GM12878 (cell line): ENCODE measurements at regions of chr12 and their contacts with region 1.

Region 1: GRCh38 chr12:1117970-1118563 is 127.0 kb downstream of the ERC1 start:
- DNase-seq: no peak
- ATAC-seq: peak; percentile 73
- H3K4me3 ChIP-seq: no peak overlapping the region
- H3K27ac ChIP-seq: no peak overlapping the region
- H3K4me1 ChIP-seq: peaks cover 4% of the 10 kb centered on the region; the same call in 1 of the 2 replicates
- H3K27me3 ChIP-seq: no peaks in the 10 kb centered on the region
- CTCF ChIP-seq: peak; percentile 80 to 87 (median 83)
- EP300 ChIP-seq: no peak
- POLR2A ChIP-seq: no peak
- RAD21 ChIP-seq: peak; percentile 97

Region 2: GRCh38 chr12:1093166-1093751 is 24.8 kb before region 1 on chr12:
- CTCF ChIA-PET with region 1: interaction called, 24 read pairs
- POLR2A ChIA-PET with region 1: interaction called, 5 read pairs
- RAD21 ChIA-PET with region 1: interaction called, 23 read pairs
- SMC1A ChIA-PET with region 1: interaction called, 15 read pairs
- in situ Hi-C with region 1: no loop called
- intact Hi-C with region 1: no loop called
- DNase-seq: no peak
- ATAC-seq: peak; percentile 77
- H3K4me3 ChIP-seq: no peak overlapping the region
- H3K27ac ChIP-seq: no peak overlapping the region
- H3K4me1 ChIP-seq: peaks cover 18% of the 10 kb centered on the region
- H3K27me3 ChIP-seq: no peaks in the 10 kb centered on the region
- CTCF ChIP-seq: peak; percentile 60 to 85 (median 81)
- EP300 ChIP-seq: no peak
- POLR2A ChIP-seq: no peak
- RAD21 ChIP-seq: peak; percentile 93

Region 3: DNA sequence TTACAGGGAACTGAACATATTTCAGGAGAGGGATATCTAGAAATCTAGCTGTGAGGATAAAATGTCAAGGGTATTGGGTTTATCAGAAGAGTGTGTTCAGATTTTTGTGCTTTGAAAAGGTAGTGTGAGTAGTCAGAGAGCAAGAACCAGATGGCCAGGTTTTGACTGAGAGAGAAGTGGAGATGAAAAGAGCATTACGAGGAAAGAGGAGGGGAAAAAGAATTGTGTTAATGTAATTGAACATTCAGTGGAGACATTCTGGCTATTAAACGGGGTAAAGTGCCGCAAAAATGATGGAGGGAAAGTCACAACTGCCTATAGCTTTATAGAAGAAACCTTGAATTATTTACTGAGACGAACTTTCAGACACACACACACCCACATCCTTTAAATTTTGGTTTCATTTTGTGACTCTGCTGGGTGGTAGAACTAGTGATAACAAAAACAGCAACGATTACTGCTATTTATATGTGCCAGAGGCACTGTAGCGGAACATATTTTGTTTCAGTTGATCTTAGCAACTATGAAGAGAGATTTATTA is 86.6 kb after region 1 on chr12:
- CTCF ChIA-PET with region 1: interaction called, 36 read pairs
- POLR2A ChIA-PET with region 1: no interaction called
- RAD21 ChIA-PET with region 1: interaction called, 28 read pairs
- SMC1A ChIA-PET with region 1: interaction called, 23 read pairs
- in situ Hi-C with region 1: no loop called
- intact Hi-C with region 1: no loop called
- DNase-seq: peak; percentile 56
- ATAC-seq: peak; percentile 99
- H3K4me3 ChIP-seq: peak overlapping the region; percentile 57
- H3K27ac ChIP-seq: peak overlapping the region; percentile 62; the same call in 1 of the 2 replicates
- H3K4me1 ChIP-seq: 0 out of 2 replicates have a peak, but pooled peaks cover 4% of the 10 kb centered on the region
- H3K27me3 ChIP-seq: no peaks in the 10 kb centered on the region
- CTCF ChIP-seq: no peak
- EP300 ChIP-seq: peak; percentile 32 to 87; a peak in 2 of 4 replicates
- POLR2A ChIP-seq: no peak
- RAD21 ChIP-seq: no peak

Region 4: DNA sequence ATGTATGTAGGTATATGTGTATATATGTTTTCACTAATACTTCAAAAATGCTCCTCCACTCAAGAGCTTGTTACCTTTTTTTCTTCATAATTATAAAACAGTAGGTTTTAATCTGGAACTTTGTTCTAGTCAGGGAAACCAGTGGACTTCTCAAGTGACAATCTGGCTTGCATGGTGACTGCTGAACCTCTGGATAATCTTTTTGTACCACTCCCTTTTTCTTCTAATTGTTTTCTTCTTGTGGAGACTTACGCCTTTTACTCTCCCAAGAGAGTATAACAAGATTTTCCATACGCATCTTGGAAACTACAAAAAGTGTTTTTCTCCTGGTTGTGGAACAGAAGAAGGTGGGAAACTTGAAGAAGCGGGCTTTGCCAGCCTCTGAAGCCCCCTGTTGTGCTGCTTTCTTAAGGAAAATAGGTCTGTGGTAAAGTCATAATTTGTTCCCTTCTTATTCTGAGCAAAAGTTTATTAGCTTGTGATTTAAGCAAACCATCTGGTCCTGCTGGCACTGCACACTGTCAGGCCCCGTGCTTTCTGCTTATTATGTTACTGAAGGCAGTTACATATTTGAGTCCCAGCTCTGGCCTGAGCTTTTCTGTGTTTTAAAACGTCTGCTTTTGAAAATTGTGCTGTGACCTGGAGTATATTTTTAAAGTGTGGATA is 164.7 kb after region 1 on chr12:
- CTCF ChIA-PET with region 1: interaction called, 13 read pairs
- POLR2A ChIA-PET with region 1: no interaction called
- RAD21 ChIA-PET with region 1: interaction called, 18 read pairs
- SMC1A ChIA-PET with region 1: interaction called, 12 read pairs
- in situ Hi-C with region 1: no loop called
- intact Hi-C with region 1: loop called (anchors 2 kb)
- DNase-seq: no peak
- ATAC-seq: no peak
- H3K4me3 ChIP-seq: no peak overlapping the region
- H3K27ac ChIP-seq: no peak overlapping the region
- H3K4me1 ChIP-seq: no peaks in the 10 kb centered on the region
- H3K27me3 ChIP-seq: no peaks in the 10 kb centered on the region
- CTCF ChIP-seq: no peak
- EP300 ChIP-seq: no peak
- POLR2A ChIP-seq: no peak
- RAD21 ChIP-seq: no peak

Region 5: GRCh38 chr12:1510056-1510812 is 392.2 kb after region 1 on chr12:
- CTCF ChIA-PET with region 1: interaction called, 16 read pairs
- POLR2A ChIA-PET with region 1: no interaction called
- RAD21 ChIA-PET with region 1: interaction called, 9 read pairs
- SMC1A ChIA-PET with region 1: interaction called, 16 read pairs
- in situ Hi-C with region 1: no loop called
- intact Hi-C with region 1: loop called (anchors 5 kb)
- DNase-seq: no peak
- ATAC-seq: no peak
- H3K4me3 ChIP-seq: no peak overlapping the region
- H3K27ac ChIP-seq: no peak overlapping the region
- H3K4me1 ChIP-seq: no peaks in the 10 kb centered on the region
- H3K27me3 ChIP-seq: no peaks in the 10 kb centered on the region; a peak in 1 of 4 replicates
- CTCF ChIP-seq: no peak
- EP300 ChIP-seq: no peak
- POLR2A ChIP-seq: no peak
- RAD21 ChIP-seq: no peak

Region 6: GRCh38 chr12:1576410-1577241 is 458.6 kb after region 1 on chr12:
- CTCF ChIA-PET with region 1: interaction called, 287 read pairs
- POLR2A ChIA-PET with region 1: interaction called, 6 read pairs
- RAD21 ChIA-PET with region 1: interaction called, 237 read pairs
- SMC1A ChIA-PET with region 1: interaction called, 276 read pairs
- in situ Hi-C with region 1: no loop called
- intact Hi-C with region 1: no loop called
- DNase-seq: no peak
- ATAC-seq: no peak
- H3K4me3 ChIP-seq: no peak overlapping the region
- H3K27ac ChIP-seq: no peak overlapping the region
- H3K4me1 ChIP-seq: no peaks in the 10 kb centered on the region
- H3K27me3 ChIP-seq: no peaks in the 10 kb centered on the region
- CTCF ChIP-seq: no peak
- EP300 ChIP-seq: no peak
- POLR2A ChIP-seq: no peak
- RAD21 ChIP-seq: no peak

Region 7: DNA sequence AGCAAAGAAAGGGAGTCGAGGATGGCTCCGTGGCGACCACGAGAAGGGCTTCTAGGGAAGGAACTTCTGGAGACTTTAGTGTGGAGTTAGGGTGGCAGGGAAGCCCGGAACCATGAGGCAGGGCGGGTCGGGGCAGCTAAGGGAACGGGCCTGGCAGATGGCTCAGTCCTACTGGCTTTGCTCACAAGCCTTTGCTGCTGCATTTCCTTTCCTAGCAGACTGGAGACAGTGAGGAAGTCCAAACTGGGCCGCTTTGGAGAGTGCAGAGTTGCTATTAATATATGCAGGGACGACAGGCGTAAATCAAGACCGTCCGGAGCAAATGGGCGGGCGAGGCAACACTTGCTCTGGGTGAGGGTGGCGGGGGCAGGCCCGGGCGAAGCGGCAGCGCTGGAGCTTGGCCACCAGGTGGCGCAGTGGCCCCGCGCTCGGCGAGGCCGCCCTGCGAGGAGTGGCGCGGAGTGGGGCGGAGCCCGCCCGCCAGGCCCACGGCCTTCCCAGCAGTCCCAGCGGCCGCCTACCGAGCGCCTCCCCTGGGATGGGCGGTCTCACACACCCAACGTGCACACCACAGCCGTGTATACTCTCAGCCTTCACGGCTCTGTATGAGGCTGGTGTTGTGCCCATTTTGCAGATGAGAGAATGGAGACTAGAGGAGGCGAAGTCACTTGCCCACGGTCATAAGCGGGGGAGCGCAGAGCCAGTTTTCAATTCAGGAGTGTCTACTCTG is 677.9 kb after region 1 on chr12:
- CTCF ChIA-PET with region 1: interaction called, 10 read pairs
- POLR2A ChIA-PET with region 1: no interaction called
- RAD21 ChIA-PET with region 1: interaction called, 15 read pairs
- SMC1A ChIA-PET with region 1: interaction called, 20 read pairs
- in situ Hi-C with region 1: no loop called
- intact Hi-C with region 1: no loop called
- DNase-seq: peak; percentile 73
- ATAC-seq: peak; percentile 96
- H3K4me3 ChIP-seq: peak overlapping the region; percentile 62
- H3K27ac ChIP-seq: peak overlapping the region; percentile 62
- H3K4me1 ChIP-seq: peaks cover 7% of the 10 kb centered on the region
- H3K27me3 ChIP-seq: no peaks in the 10 kb centered on the region
- CTCF ChIP-seq: peak; percentile 81 to 97 (median 92); a peak in 5 of 6 replicates
- EP300 ChIP-seq: no peak
- POLR2A ChIP-seq: peak; percentile 90
- RAD21 ChIP-seq: peak; percentile 78